PC-9 (cell line): ENCODE measurements at regions of chr6 and their contacts with region 1.

Region 1: GRCh38 chr6:34922177-34922663 is 33.2 kb downstream of the ANKS1A start:
- DNase-seq: peak; percentile 5 to 70
- H3K4me3 ChIP-seq: no peak overlapping the region
- H3K27ac ChIP-seq: no peak overlapping the region; the same call in 1 of the 2 replicates
- H3K4me1 ChIP-seq: 0 out of 2 replicates have a peak, but pooled peaks cover 7% of the 10 kb centered on the region
- H3K27me3 ChIP-seq: no peaks in the 10 kb centered on the region
- CTCF ChIP-seq: no peak

Region 2: GRCh38 chr6:34945317-34945716 is 23.1 kb after region 1 on chr6:
- CTCF ChIA-PET with region 1: no interaction called
- POLR2A ChIA-PET with region 1: no interaction called
- intact Hi-C with region 1: loop called (anchors 2 kb)
- DNase-seq: no peak
- H3K4me3 ChIP-seq: no peak overlapping the region
- H3K27ac ChIP-seq: no peak overlapping the region
- H3K4me1 ChIP-seq: no peaks in the 10 kb centered on the region
- H3K27me3 ChIP-seq: no peaks in the 10 kb centered on the region
- CTCF ChIP-seq: no peak

Region 3: DNA sequence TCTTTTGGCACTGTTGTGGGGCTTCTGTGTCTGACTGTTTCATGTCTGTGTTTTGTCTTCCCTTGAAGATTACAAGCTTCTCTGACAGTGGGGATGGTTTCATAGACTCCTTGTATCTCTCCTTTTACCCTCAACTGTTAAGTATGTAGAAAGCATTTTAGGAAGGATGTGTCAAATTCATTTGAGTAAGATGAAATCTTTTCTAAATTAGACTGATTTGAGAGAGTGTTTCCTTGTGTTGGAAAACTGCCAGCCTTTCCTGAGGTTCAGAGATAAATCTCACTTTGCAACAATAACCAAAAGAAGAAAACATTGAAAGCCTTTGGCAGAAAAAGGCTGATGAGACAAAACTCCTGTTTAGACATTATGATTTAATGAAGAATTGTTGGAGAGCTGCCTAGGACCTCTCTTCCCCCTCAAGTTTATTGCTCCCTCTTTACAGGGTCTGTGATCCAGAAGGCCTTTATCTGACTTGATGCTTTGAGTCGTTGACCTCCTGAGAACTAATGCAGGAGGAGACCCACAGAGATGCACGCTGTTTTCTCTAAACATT is 35.1 kb after region 1 on chr6:
- CTCF ChIA-PET with region 1: no interaction called
- POLR2A ChIA-PET with region 1: no interaction called
- intact Hi-C with region 1: no loop called
- DNase-seq: no peak
- H3K4me3 ChIP-seq: no peak overlapping the region
- H3K27ac ChIP-seq: no peak overlapping the region
- H3K4me1 ChIP-seq: peaks cover 18% of the 10 kb centered on the region
- H3K27me3 ChIP-seq: no peaks in the 10 kb centered on the region
- CTCF ChIP-seq: no peak